ENCODE measurements at regions of chrX and their contacts with region 1.

Region 1: GRCh38 chrX:41384041-41384705 is 50.2 kb downstream of the DDX3X start:
- DNase-seq: peak; percentile 76
- H3K4me3 Mint-ChIP-seq: peak overlapping the region; percentile 34
- H3K27ac Mint-ChIP-seq: peak overlapping the region; percentile 99
- H3K4me1 Mint-ChIP-seq: peaks cover 21% of the 10 kb centered on the region
- H3K27me3 Mint-ChIP-seq: no peaks in the 10 kb centered on the region

Region 2: GRCh38 chrX:41333744-41334259 is 50.4 kb before region 1 on chrX and contains the start of gene DDX3X:
- CTCF ChIA-PET with region 1: interaction called, 5 read pairs
- POLR2A ChIA-PET with region 1: interaction called, 34 read pairs
- DNase-seq: peak; percentile 86
- H3K4me3 Mint-ChIP-seq: peak within 1 kb of the TSS; percentile 87
- H3K27ac Mint-ChIP-seq: peak within 1 kb of the TSS; percentile 100
- H3K4me1 Mint-ChIP-seq: peaks cover 37% of the 10 kb centered on the region
- H3K27me3 Mint-ChIP-seq: no peaks in the 10 kb centered on the region
- total RNA-seq, gene DDX3X: 224 to 225 TPM

Region 3: DNA sequence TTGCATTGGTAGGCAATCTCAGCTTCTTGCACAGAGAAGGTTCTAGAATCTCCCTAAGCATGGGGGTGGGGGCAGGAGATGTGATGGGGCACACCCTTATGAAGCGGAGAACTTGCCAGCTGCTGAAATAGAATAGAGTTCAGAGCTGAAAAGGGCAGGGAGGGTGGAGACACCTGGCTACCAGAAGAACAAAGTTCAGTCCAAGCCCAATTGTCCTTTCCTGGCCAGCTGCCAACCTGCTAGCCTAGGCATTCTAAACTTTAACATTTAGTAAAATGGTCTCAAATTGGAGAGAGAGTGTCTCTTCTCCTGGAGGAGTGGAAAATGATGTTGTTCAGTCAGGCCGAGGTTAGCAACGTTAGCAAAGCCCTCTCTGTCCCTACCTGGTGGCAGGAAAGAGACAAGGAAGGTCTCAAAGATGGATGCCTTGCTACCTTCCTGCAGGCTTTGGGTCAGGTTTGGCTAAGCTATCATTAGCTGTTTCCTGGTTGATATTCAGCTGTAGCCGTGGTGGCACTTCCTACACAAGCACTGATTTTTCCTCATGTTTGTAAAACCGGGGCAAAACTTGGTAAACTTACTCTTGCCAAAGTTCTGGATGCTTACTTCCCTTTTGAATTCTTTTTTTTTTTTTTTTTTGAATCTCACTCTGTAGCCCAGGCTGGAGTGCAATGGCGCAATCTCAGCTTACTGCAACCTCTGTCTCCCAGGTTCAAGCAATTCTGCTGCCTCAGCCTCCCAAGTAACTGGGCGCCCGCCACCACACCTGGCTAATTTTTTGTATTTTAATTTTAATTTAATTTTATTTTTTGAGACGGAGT is 28.3 kb after region 1 on chrX:
- CTCF ChIA-PET with region 1: no interaction called
- POLR2A ChIA-PET with region 1: no interaction called
- DNase-seq: no peak
- H3K4me3 Mint-ChIP-seq: no peak overlapping the region
- H3K27ac Mint-ChIP-seq: no peak overlapping the region
- H3K4me1 Mint-ChIP-seq: peaks cover 1% of the 10 kb centered on the region
- H3K27me3 Mint-ChIP-seq: no peaks in the 10 kb centered on the region

Region 4: GRCh38 chrX:41441934-41442823 is 58.0 kb after region 1 on chrX:
- CTCF ChIA-PET with region 1: interaction called, 3 read pairs
- POLR2A ChIA-PET with region 1: interaction called, 11 read pairs
- DNase-seq: peak; percentile 92
- H3K4me3 Mint-ChIP-seq: peak overlapping the region; percentile 46
- H3K27ac Mint-ChIP-seq: peak overlapping the region; percentile 82
- H3K4me1 Mint-ChIP-seq: peaks cover 21% of the 10 kb centered on the region
- H3K27me3 Mint-ChIP-seq: no peaks in the 10 kb centered on the region